CD14-positive monocyte (primary cell): ENCODE measurements at regions of chr2 and their contacts with region 1.

Region 1: DNA sequence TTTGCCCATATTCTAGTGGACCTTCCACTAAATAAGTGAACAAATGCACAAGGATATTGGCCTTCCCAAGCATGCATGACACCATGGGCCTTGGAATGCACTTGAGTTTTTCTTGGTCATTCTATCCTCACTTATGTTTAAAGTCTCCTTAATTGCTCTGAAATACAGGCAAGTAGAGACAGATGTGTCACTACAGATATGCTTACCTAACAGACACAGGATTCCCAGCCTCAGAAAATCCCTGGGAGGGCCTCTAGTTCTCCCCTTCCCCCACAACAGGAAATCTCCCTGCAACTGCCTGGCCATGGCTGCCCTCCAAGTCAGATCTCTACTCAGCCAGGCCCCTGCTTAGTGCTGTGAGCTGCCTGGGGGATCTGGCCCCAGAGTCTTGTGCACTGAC is 445.2 kb downstream of the IRS1 start:
- DNase-seq: no peak
- H3K4me3 ChIP-seq: no peak overlapping the region
- H3K4me3 Mint-ChIP-seq: no peak overlapping the region
- H3K27ac ChIP-seq: no peak overlapping the region
- H3K27ac Mint-ChIP-seq: peak overlapping the region in 1 of 7 donors; percentile 35
- H3K4me1 ChIP-seq: no peaks in the 10 kb centered on the region
- H3K4me1 Mint-ChIP-seq: peaks cover 3% of the 10 kb centered on the region
- H3K27me3 ChIP-seq: peaks cover 2 to 7% of the 10 kb centered on the region in 2 donors
- H3K27me3 Mint-ChIP-seq: peaks cover 9 to 14% (median 9%) of the 10 kb centered on the region in 3 donors
- CTCF ChIP-seq: no peak

Region 2: DNA sequence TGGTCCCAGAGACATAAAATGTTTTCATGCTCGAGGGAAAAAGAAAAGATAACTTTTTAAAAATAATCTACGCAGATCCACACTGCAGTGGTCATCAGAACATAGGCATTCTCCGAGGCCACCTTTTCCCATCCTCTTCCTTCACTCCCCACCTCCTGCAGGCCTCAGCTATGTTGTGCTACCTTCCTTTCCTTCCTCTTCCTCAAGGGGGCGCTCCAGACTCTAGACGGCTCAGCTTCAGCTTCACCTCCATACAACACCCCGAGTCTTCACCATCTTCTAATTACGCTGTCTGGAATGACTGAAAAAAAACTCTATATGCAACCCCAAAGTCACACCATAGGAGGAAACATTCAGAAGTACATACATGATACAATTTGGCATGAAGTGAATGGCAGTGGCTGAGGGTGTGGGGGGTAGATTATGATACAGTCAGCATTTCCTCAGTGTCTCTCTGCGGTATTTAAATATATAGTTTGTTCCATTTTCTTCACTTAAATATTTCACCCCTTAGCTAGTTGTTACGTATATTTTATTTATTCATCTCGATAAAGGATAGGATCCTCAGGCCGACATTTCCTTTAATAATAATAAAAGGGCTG is 138.4 kb before region 1 on chr2:
- intact Hi-C with region 1: loop called in 1 of 2 experiments (anchors 10 kb)
- DNase-seq: peak; percentile 27 to 46 (median 28)
- H3K4me3 ChIP-seq: no peak overlapping the region
- H3K4me3 Mint-ChIP-seq: no peak overlapping the region
- H3K27ac ChIP-seq: no peak overlapping the region
- H3K27ac Mint-ChIP-seq: no peak overlapping the region
- H3K4me1 ChIP-seq: peaks cover 5 to 12% of the 10 kb centered on the region in 2 donors
- H3K4me1 Mint-ChIP-seq: peaks cover 16% of the 10 kb centered on the region
- H3K27me3 ChIP-seq: no peaks in the 10 kb centered on the region
- H3K27me3 Mint-ChIP-seq: peaks cover 0 to 1% (median 1%) of the 10 kb centered on the region in 3 donors
- CTCF ChIP-seq: peak; percentile 78